B cell (primary cell): ENCODE measurements at regions of chr2 and their contacts with region 1.

Region 1: DNA sequence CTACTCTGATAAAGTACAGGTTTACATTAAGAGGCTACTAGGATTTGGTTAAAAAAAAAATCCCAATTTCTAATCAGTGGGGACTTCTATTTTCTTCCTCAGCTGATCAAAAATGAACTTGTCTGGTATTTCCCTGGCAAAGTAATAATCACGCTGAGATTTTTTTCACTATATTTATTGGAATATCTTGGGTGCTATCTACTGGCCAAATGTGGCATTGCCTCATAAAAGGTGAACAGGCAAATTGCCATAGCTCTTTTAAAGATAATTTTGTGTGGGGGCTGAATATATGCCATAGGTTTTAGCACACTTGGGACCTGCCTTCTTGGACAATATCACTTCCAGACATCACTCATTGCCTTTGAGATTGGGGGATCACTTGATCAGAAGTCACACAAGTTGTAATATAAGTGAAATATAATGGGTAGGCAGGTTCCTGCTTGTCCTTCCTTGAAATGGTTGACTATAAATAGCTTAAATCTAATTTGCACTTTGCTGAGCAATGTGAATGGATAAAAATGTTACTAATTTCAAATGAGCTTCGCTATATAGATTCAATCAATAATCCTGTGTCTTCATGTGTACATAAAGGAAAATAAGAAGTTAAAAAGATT is 7.0 kb upstream of the NXPH2 start:
- DNase-seq: peak; percentile 39
- ATAC-seq: no peak
- H3K4me3 ChIP-seq: no peak overlapping the region
- H3K4me3 Mint-ChIP-seq: no peak overlapping the region
- H3K27ac ChIP-seq: no peak overlapping the region
- H3K27ac Mint-ChIP-seq: no peak overlapping the region
- H3K4me1 ChIP-seq: no peaks in the 10 kb centered on the region
- H3K4me1 Mint-ChIP-seq: no peaks in the 10 kb centered on the region
- H3K27me3 ChIP-seq: no peaks in the 10 kb centered on the region
- H3K27me3 Mint-ChIP-seq: peaks cover 37% of the 10 kb centered on the region
- CTCF ChIP-seq: peak; percentile 82

Region 2: DNA sequence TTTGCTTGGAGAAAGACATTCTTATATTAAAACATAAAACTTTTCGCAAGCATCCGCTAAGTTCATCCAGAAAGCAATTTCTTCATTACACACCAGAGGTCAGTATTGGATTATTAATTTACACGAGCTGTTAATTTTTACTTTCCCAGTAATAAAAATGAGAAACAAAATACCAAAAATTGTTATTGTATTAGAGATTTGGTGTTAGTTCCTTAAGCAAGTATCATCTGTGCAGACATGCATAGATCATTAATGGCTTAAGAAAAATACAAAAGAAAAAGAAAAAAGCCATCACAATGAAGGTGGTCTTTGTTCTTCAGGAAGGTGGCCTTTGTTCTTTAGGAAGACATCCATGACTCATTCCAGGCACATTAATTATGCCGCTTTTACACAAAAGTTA is 876.5 kb before region 1 on chr2:
- CTCF ChIA-PET with region 1: interaction called, 43 read pairs
- POLR2A ChIA-PET with region 1: no interaction called
- intact Hi-C with region 1: loop called (anchors 1 kb)
- DNase-seq: peak; percentile 13
- ATAC-seq: no peak
- H3K4me3 ChIP-seq: no peak overlapping the region
- H3K4me3 Mint-ChIP-seq: no peak overlapping the region
- H3K27ac ChIP-seq: no peak overlapping the region
- H3K27ac Mint-ChIP-seq: no peak overlapping the region
- H3K4me1 ChIP-seq: no peaks in the 10 kb centered on the region
- H3K4me1 Mint-ChIP-seq: no peaks in the 10 kb centered on the region
- H3K27me3 ChIP-seq: no peaks in the 10 kb centered on the region
- H3K27me3 Mint-ChIP-seq: peaks cover 7% of the 10 kb centered on the region
- CTCF ChIP-seq: peak; percentile 72

Region 3: DNA sequence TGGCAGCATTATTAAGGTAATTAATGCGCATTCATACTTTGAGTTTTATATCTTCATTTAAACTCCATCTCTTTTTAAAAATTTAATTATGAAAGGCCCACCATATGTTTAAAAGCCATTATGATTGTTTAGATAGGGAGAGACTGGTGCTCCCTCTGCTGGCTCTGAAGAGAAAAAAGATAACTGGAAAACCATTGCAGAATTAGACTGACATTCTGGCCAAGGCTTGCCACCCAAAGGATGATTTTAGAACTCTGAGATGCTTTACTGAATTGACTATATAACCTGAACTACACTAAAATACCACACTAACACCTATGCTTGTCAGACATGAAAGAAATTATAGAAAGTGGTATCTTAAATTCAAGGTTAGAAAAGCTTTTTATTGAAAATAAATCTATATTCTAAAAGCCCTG is 413.2 kb before region 1 on chr2:
- CTCF ChIA-PET with region 1: no interaction called
- POLR2A ChIA-PET with region 1: no interaction called
- intact Hi-C with region 1: loop called (anchors 5 kb)
- DNase-seq: peak; percentile 5
- ATAC-seq: no peak
- H3K4me3 ChIP-seq: no peak overlapping the region
- H3K4me3 Mint-ChIP-seq: no peak overlapping the region
- H3K27ac ChIP-seq: no peak overlapping the region
- H3K27ac Mint-ChIP-seq: no peak overlapping the region
- H3K4me1 ChIP-seq: no peaks in the 10 kb centered on the region
- H3K4me1 Mint-ChIP-seq: no peaks in the 10 kb centered on the region
- H3K27me3 ChIP-seq: no peaks in the 10 kb centered on the region
- H3K27me3 Mint-ChIP-seq: no peaks in the 10 kb centered on the region
- CTCF ChIP-seq: peak; percentile 57

Region 4: DNA sequence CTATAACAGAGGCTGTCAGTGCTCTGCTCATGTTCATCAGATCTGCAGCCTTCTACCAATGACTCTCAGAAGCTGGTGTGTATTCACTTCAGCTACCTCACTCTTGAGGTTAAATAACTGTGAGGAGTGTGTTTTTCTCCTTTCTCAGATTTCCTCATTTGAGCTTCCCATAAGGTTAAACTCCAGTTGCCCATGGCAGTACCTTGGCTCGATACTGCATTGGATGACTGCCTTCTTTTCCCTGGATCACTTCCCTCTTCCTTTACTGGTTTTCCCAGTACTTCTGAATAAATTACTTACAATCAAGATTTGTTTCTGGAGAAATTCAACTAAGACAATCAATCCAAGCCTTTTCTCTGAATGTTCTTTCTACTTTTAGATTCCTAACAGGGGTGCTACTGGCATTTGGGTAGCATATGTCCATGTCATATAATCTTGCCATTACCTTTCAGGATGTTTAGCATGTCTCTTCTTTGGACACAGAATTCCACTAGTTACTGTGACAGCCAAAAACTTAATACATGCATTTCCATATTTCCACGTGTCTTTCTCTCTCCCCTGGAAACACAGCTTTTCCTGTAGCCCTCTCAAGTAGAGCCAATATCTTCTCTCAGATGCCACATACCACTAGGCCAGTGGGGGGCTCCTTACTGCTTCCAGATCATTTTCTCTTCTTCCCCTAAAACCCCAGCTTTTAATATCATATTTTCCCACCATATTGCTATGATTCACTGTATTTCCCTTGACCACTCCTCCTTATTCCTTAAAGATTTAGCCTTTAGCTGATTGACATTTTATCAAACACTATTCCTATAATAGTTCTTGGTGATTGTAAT is 300.6 kb before region 1 on chr2:
- CTCF ChIA-PET with region 1: interaction called, 7 read pairs
- POLR2A ChIA-PET with region 1: no interaction called
- intact Hi-C with region 1: loop called (anchors 1 kb)
- DNase-seq: no peak
- ATAC-seq: no peak
- H3K4me3 ChIP-seq: no peak overlapping the region
- H3K4me3 Mint-ChIP-seq: no peak overlapping the region
- H3K27ac ChIP-seq: no peak overlapping the region
- H3K27ac Mint-ChIP-seq: no peak overlapping the region
- H3K4me1 ChIP-seq: no peaks in the 10 kb centered on the region
- H3K4me1 Mint-ChIP-seq: no peaks in the 10 kb centered on the region
- H3K27me3 ChIP-seq: no peaks in the 10 kb centered on the region
- H3K27me3 Mint-ChIP-seq: no peaks in the 10 kb centered on the region
- CTCF ChIP-seq: no peak

Region 5: DNA sequence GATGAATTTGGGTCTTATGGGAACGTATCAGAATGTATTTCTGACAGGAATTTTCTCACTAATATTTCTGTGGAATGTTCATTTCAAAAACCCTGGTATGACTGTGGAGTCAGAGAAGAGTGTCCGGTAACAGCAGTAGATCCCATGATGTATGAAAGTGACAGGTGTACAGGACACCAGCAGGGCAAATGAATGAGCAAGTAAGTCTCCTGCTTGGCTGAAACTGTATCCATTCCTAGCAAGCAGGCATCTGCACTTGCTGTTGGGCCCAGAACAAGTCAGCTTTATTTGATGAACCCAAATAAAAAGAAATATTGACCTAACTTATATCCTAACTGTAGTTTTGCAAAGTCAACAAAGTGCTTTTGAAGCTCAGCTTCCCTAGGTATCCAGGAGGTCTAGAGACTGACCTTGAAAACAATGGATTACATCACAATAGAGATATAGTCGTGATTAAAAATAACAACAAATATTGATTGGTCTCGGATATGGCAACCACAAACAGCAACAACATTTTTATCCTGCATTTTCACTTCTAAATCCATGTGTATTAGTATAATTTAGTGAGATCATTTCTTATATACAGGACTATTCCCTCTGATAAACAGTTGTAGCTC is 44.6 kb before region 1 on chr2:
- CTCF ChIA-PET with region 1: no interaction called
- POLR2A ChIA-PET with region 1: no interaction called
- intact Hi-C with region 1: no loop called
- DNase-seq: no peak
- ATAC-seq: no peak
- H3K4me3 ChIP-seq: no peak overlapping the region
- H3K4me3 Mint-ChIP-seq: no peak overlapping the region
- H3K27ac ChIP-seq: no peak overlapping the region
- H3K27ac Mint-ChIP-seq: no peak overlapping the region
- H3K4me1 ChIP-seq: no peaks in the 10 kb centered on the region
- H3K4me1 Mint-ChIP-seq: no peaks in the 10 kb centered on the region
- H3K27me3 ChIP-seq: peaks cover 0 to 3% (median 0%) of the 10 kb centered on the region in 4 experiments
- H3K27me3 Mint-ChIP-seq: no peaks in the 10 kb centered on the region
- CTCF ChIP-seq: no peak